Breast epithelium (tissue), 4 donors: ENCODE measurements at regions of chr20 and their contacts with region 1.

Region 1: DNA sequence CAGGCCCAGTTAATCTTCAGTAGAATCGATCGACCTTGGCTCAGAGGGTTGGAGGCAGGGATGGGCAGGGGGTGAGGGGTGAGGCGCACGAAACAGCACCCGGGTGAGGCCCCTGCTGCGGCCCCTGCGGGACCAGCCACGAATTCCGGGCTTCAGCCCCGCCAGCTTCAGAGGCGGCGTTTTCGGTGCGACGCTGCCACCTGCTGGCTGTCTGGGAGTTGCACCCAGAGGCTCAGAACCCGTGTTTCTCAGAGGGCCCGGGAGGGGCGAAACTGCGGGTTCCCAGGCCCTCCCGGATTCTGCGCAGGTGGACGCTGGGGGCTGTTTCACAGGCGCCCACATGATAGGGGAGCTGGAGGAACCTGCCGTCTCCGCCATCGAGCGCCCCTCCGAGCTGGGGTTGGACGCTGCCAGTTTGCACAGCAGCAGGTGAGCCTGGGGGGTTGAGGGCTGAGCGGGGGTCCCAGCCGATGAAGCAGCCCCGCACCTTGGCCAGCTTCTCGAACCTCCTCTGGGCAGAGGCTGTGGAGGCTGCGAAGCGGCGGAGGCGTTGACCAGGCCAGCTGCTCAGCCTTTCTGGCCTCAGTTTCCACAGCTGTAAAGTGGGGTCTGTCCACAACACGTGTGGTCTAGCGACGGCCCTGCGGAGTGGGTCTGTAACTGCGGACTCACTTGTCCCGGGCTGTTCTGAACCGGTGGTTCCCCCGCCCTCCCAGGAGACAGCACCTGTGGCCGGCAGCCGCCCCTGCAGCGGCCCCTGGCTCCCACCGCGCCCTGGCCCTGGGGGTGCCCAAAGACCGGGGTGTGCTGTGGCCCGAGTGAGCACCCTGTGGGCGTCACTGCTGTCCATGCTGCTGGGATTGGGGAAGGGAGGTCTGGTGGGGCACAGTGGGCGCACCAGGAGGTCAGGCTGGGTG is 2.5 kb upstream of the BHLHE23 start:
- DNase-seq: peak; percentile 43 to 71
- H3K4me3 ChIP-seq: peak overlapping the region in 1 of 3 donors; percentile 39
- H3K27ac ChIP-seq: no peak overlapping the region
- H3K4me1 ChIP-seq: peaks cover 6 to 15% of the 10 kb centered on the region in 2 donors
- H3K27me3 ChIP-seq: peaks cover 25 to 73% of the 10 kb centered on the region in 2 donors
- CTCF ChIP-seq: peak; percentile 89 to 94 (median 92)
- POLR2A ChIP-seq: no peak

Region 2: DNA sequence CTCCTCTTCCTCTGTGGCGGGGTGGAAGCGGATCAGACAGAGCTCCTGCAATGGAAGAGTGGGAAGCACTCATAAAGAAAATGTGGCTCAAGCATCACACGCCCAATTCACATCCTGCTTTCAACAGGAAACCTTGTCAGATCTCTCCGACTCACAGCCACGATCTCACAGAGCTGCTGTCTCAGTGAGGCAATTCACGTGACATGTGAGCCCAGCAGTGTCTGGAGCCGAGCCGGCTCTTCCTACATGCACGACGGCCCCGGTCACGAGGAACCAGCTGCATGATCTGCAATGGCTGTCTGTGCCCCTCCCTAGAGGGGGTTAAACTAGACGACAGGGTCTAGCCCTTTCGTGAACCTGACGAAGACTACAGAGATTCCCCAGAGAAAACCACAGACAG is 118.2 kb before region 1 on chr20:
- intact Hi-C with region 1: loop called (anchors 5 kb)
- DNase-seq: no peak
- H3K4me3 ChIP-seq: no peak overlapping the region
- H3K27ac ChIP-seq: no peak overlapping the region
- H3K4me1 ChIP-seq: no peaks in the 10 kb centered on the region
- H3K27me3 ChIP-seq: no peaks in the 10 kb centered on the region
- CTCF ChIP-seq: no peak
- POLR2A ChIP-seq: no peak

Region 3: DNA sequence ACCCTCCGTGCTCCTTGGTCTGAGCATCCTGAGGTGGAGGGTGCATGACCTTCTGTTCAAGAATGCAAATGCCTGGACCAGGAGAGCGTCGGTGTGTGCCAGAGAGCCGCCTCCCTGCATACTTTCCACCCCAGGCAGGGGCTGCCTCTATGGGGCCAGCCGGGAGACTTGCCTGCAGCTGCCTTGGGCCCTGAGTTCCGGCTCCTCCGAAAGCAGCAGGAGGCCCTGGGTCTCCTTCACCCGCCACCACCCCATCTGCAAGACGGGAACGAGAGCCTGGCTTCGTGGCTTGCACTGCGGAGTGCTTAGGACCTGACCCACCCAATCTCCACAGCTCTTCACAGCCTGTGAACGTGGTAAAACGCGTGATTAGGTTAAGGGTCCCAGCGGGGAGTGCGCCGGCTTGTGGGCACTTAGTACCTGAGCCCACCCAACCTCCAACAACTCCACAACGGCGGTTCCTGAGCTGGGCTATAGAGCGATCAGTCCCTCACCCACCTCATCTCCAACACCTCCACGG is 18.9 kb before region 1 on chr20:
- intact Hi-C with region 1: loop called (anchors 1 kb)
- DNase-seq: no peak
- H3K4me3 ChIP-seq: no peak overlapping the region
- H3K27ac ChIP-seq: no peak overlapping the region
- H3K4me1 ChIP-seq: no peaks in the 10 kb centered on the region
- H3K27me3 ChIP-seq: peaks cover 4 to 57% of the 10 kb centered on the region in 2 donors
- CTCF ChIP-seq: no peak
- POLR2A ChIP-seq: no peak

Region 4: GRCh38 chr20:63309261-63310071 is 300.2 kb after region 1 on chr20:
- intact Hi-C with region 1: no loop called
- DNase-seq: no peak
- H3K4me3 ChIP-seq: no peak overlapping the region
- H3K27ac ChIP-seq: no peak overlapping the region
- H3K4me1 ChIP-seq: no peaks in the 10 kb centered on the region
- H3K27me3 ChIP-seq: peaks cover 0 to 81% of the 10 kb centered on the region in 2 donors
- CTCF ChIP-seq: peak; percentile 49 to 77 (median 68)
- POLR2A ChIP-seq: no peak